ENCODE measurements at regions of chr1 and their contacts with region 1.

Region 1: GRCh38 chr1:47437447-47438164 is at the start of gene FOXD2:
- DNase-seq: peak; percentile 66
- ATAC-seq: peak; percentile 92
- H3K4me3 ChIP-seq: peak within 1 kb of the TSS; percentile 74
- H3K27ac ChIP-seq: peak within 1 kb of the TSS; percentile 88
- H3K4me1 ChIP-seq: peaks cover 2% of the 10 kb centered on the region; the same call in 1 of the 2 replicates
- H3K27me3 ChIP-seq: peaks cover 44% of the 10 kb centered on the region
- CTCF ChIP-seq: peak; percentile 78
- POLR2A ChIP-seq: peak; percentile 37
- RAD21 ChIP-seq: no peak
- total RNA-seq, gene FOXD2: under 0.01 TPM in 2 replicates

Region 2: DNA sequence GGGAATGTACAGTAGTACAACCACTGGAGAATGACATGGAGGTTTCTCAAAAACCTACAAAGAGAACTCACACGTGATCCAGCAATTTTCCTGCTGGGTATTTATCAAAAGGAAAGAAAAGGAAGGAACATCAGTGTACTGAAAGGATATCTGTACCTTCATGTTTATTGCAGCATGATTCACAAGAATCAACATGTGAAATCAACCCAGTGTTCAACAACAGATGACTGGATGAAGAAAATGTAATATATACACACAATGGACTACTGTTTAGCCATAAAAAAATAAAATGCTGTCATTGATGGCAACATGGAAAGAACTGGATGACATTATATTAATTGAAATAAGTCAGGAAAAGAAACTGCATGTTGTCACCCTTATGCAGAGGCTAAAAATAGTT is 477.4 kb before region 1 on chr1:
- CTCF ChIA-PET with region 1: no interaction called
- POLR2A ChIA-PET with region 1: no interaction called
- dilution Hi-C with region 1: no loop called
- in situ Hi-C with region 1: no loop called
- intact Hi-C with region 1: no loop called
- DNase-seq: no peak
- ATAC-seq: no peak
- H3K4me3 ChIP-seq: no peak overlapping the region
- H3K27ac ChIP-seq: no peak overlapping the region
- H3K4me1 ChIP-seq: no peaks in the 10 kb centered on the region
- H3K27me3 ChIP-seq: no peaks in the 10 kb centered on the region
- CTCF ChIP-seq: no peak
- POLR2A ChIP-seq: no peak
- RAD21 ChIP-seq: no peak

Region 3: DNA sequence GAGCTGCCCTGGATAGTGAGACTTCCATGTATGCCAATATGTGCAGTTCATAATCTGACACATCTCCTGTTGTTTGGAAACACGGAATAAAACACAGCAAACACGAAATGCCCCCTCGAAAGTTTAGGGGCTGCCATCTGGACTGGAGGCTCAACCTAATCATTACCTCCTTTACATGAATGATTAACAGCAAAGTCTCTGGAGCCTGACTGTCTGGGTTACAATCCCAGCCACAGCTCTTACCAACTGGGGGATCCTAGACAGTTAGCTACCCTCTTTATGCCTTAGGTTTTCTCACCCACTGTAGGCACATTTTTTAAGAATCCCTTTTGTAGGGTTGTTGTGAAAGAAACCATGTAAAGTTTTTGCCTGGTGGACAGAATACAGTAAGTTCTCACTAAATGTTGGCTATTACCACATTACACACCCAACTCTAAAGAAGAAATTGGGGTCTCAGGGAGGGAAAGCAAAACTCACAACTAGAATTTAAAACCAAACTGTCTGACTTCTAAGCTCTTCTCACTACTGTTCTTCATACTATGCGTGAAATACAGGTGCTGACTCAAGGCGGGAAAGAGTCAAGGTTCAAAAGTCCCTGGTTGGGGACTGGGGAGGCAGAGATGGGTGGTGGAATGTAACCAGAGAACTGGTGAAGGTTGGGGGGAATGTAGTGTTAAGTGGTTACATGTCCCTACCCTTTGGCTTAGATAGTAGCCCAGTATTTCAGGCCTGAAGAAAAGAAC is 276.1 kb before region 1 on chr1:
- CTCF ChIA-PET with region 1: no interaction called
- POLR2A ChIA-PET with region 1: no interaction called
- dilution Hi-C with region 1: no loop called
- in situ Hi-C with region 1: no loop called
- intact Hi-C with region 1: no loop called
- DNase-seq: no peak
- ATAC-seq: no peak
- H3K4me3 ChIP-seq: no peak overlapping the region
- H3K27ac ChIP-seq: no peak overlapping the region
- H3K4me1 ChIP-seq: no peaks in the 10 kb centered on the region
- H3K27me3 ChIP-seq: no peaks in the 10 kb centered on the region
- CTCF ChIP-seq: no peak
- POLR2A ChIP-seq: no peak
- RAD21 ChIP-seq: no peak

Region 4: DNA sequence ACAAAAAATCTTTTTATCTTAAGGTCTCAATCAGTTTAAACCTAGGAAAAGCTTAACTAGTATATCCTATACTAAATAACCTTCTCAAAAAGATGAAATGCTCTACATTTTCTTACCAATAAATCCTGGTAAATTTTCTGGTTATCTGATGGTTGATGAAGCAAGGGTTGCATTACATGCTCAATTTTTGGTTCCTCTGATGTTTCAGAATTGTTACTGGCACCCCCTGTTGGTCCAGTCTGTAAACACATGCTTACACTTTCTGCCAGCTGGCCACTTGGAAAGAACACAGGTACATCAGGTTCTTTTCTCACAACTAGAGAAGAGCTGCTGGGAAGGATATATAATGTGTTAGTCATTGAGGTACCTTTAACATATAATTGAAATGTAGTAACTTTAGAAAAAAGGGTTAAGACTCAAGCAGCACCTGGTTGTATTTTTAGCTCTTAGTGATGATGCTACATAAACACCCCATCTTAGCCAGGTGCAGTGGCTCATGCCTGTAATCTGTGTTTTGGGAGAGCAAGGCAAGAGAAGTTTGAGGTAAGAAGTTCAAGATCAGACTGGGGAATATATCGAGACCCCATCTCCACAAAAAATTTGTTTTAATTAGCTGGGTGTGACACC is 174.7 kb before region 1 on chr1:
- CTCF ChIA-PET with region 1: no interaction called
- POLR2A ChIA-PET with region 1: no interaction called
- dilution Hi-C with region 1: no loop called
- in situ Hi-C with region 1: no loop called
- intact Hi-C with region 1: no loop called
- DNase-seq: peak; percentile 38
- ATAC-seq: peak; percentile 73
- H3K4me3 ChIP-seq: no peak overlapping the region
- H3K27ac ChIP-seq: no peak overlapping the region
- H3K4me1 ChIP-seq: no peaks in the 10 kb centered on the region
- H3K27me3 ChIP-seq: no peaks in the 10 kb centered on the region
- CTCF ChIP-seq: peak; percentile 56
- POLR2A ChIP-seq: no peak
- RAD21 ChIP-seq: peak; percentile 51

Region 5: GRCh38 chr1:47333922-47334764 is 103.5 kb before region 1 on chr1:
- CTCF ChIA-PET with region 1: interaction called, 3 read pairs
- POLR2A ChIA-PET with region 1: no interaction called
- dilution Hi-C with region 1: no loop called
- in situ Hi-C with region 1: no loop called
- intact Hi-C with region 1: loop called (anchors 10 kb)
- DNase-seq: peak; percentile 74
- ATAC-seq: peak; percentile 92
- H3K4me3 ChIP-seq: peak overlapping the region; percentile 86
- H3K27ac ChIP-seq: peak overlapping the region; percentile 88
- H3K4me1 ChIP-seq: peaks cover 6% of the 10 kb centered on the region
- H3K27me3 ChIP-seq: no peaks in the 10 kb centered on the region
- CTCF ChIP-seq: peak; percentile 7; the same call in 1 of the 2 replicates
- POLR2A ChIP-seq: peak; percentile 59
- RAD21 ChIP-seq: no peak

Region 6: GRCh38 chr1:47388891-47389238 is 48.7 kb before region 1 on chr1:
- CTCF ChIA-PET with region 1: interaction called, 10 read pairs
- POLR2A ChIA-PET with region 1: no interaction called
- dilution Hi-C with region 1: no loop called
- in situ Hi-C with region 1: no loop called
- intact Hi-C with region 1: loop called (anchors 2 kb)
- DNase-seq: peak; percentile 67
- ATAC-seq: peak; percentile 91
- H3K4me3 ChIP-seq: no peak overlapping the region
- H3K27ac ChIP-seq: no peak overlapping the region
- H3K4me1 ChIP-seq: peaks cover 2% of the 10 kb centered on the region; the same call in 1 of the 2 replicates
- H3K27me3 ChIP-seq: no peaks in the 10 kb centered on the region; the same call in 1 of the 2 replicates
- CTCF ChIP-seq: peak; percentile 90
- POLR2A ChIP-seq: no peak; the same call in 1 of the 2 replicates
- RAD21 ChIP-seq: peak; percentile 96

Region 7: DNA sequence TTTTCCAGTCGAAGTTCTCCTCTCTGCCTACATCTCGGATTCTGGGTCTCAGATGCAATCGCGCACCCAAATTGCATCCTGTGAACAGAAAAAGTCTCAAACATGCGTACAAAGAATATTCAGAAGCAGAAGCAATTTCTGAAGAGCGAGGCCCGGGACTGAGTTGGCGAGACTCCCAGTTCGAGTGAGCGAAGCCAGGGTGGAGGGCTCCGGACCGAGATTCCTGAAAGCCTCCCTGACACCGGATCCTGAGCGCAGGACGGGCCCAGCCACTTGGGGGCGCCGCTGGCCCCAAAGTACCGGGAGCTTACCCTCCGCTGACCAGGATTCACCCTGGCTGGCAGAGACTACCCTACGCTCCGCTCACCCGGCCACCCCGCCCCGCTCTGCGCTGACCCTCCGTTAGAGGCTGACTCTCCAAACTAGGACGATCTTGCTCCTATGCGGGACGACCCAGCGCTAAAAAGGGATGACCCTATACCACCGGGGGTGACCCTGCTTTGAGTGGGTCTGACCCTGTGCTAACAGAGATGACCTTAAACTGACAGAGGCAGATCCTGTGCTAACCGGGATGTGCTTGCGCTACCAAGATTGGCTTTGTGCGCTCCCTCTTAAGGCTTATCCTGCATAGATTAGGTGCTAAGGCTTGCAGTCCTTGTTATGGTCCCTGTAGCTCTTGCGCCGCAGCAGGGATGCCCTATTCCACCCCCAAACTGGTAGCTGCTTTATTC is 12.4 kb after region 1 on chr1:
- CTCF ChIA-PET with region 1: interaction called, 19 read pairs
- POLR2A ChIA-PET with region 1: no interaction called
- dilution Hi-C with region 1: no loop called
- in situ Hi-C with region 1: no loop called
- intact Hi-C with region 1: no loop called
- DNase-seq: no peak
- ATAC-seq: peak; percentile 70
- H3K4me3 ChIP-seq: no peak overlapping the region
- H3K27ac ChIP-seq: no peak overlapping the region
- H3K4me1 ChIP-seq: no peaks in the 10 kb centered on the region
- H3K27me3 ChIP-seq: peaks cover 67% of the 10 kb centered on the region
- CTCF ChIP-seq: peak; percentile 39
- POLR2A ChIP-seq: no peak
- RAD21 ChIP-seq: peak; percentile 36

Region 8: GRCh38 chr1:47710329-47711071 is 272.9 kb after region 1 on chr1:
- CTCF ChIA-PET with region 1: interaction called, 15 read pairs
- POLR2A ChIA-PET with region 1: no interaction called
- dilution Hi-C with region 1: no loop called
- in situ Hi-C with region 1: no loop called
- intact Hi-C with region 1: loop called (anchors 1 kb)
- DNase-seq: peak; percentile 37
- ATAC-seq: peak; percentile 93
- H3K4me3 ChIP-seq: no peak overlapping the region
- H3K27ac ChIP-seq: no peak overlapping the region
- H3K4me1 ChIP-seq: no peaks in the 10 kb centered on the region; the same call in 1 of the 2 replicates
- H3K27me3 ChIP-seq: peaks cover 61% of the 10 kb centered on the region
- CTCF ChIP-seq: peak; percentile 95
- POLR2A ChIP-seq: 0 out of 2 replicates have a peak, but pooled peaks have one; percentile 32
- RAD21 ChIP-seq: peak; percentile 95

Region 9: GRCh38 chr1:47725992-47726855 is 288.6 kb after region 1 on chr1:
- CTCF ChIA-PET with region 1: interaction called, 32 read pairs
- POLR2A ChIA-PET with region 1: no interaction called
- dilution Hi-C with region 1: no loop called
- in situ Hi-C with region 1: no loop called
- intact Hi-C with region 1: loop called (anchors 1 kb)
- DNase-seq: peak; percentile 63
- ATAC-seq: peak; percentile 98
- H3K4me3 ChIP-seq: no peak overlapping the region
- H3K27ac ChIP-seq: no peak overlapping the region
- H3K4me1 ChIP-seq: no peaks in the 10 kb centered on the region
- H3K27me3 ChIP-seq: peaks cover 21% of the 10 kb centered on the region
- CTCF ChIP-seq: peak; percentile 79
- POLR2A ChIP-seq: no peak
- RAD21 ChIP-seq: peak; percentile 66

Measured in IMR-90 (cell line).